HCT116 (cell line): ENCODE measurements at regions of chr7 and their contacts with region 1.

Region 1: DNA sequence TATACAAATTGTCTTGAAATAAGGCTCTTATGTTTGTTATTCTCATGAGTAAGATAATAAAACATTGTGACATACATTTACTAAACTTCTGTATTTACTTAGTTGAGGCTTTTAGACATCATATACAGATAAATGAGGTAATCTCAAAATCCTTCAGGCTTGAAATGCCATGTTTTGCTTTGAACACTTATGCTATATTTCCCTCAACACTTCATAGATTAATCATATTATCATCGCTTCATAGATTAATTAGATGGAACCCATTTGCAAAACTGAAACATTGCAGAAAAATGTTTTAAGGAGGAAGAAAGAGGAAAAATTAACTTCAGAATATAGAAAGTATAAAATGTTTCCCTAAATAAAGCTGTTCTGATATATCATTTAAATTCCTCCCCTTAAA is 165.0 kb upstream of the CNTNAP2 start:
- DNase-seq: no peak
- ATAC-seq: no peak
- H3K4me3 ChIP-seq: no peak overlapping the region
- H3K27ac ChIP-seq: no peak overlapping the region
- H3K4me1 ChIP-seq: no peaks in the 10 kb centered on the region
- H3K27me3 ChIP-seq: no peaks in the 10 kb centered on the region
- CTCF ChIP-seq: no peak
- POLR2A ChIP-seq: no peak
- RAD21 ChIP-seq: no peak

Region 2: DNA sequence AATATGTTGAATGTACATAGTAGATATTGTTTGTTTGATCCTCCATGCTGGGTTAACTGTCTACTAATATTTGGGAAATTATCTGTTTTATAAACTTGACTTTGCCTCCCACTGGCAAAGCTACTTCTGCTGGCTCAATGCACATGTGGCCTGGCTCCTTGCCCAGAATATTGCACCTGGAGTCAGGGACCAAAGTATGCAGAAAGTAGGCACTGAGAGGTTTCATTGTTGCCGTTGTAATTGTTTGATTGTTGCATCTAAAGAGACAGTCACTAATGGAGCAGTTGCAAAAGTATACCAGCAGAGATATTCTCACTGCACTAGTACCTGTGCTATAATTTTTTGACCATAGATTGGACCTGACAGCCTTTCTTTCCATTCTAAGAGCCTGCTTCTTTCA is 27.2 kb after region 1 on chr7:
- CTCF ChIA-PET with region 1: no interaction called
- POLR2A ChIA-PET with region 1: no interaction called
- RAD21 ChIA-PET with region 1: no interaction called
- intact Hi-C with region 1: loop called (anchors 2 kb)
- DNase-seq: no peak
- ATAC-seq: no peak
- H3K4me3 ChIP-seq: no peak overlapping the region
- H3K27ac ChIP-seq: no peak overlapping the region
- H3K4me1 ChIP-seq: no peaks in the 10 kb centered on the region
- H3K27me3 ChIP-seq: no peaks in the 10 kb centered on the region
- CTCF ChIP-seq: no peak
- POLR2A ChIP-seq: no peak
- RAD21 ChIP-seq: no peak

Region 3: GRCh38 chr7:146201945-146202344 is 250.4 kb after region 1 on chr7:
- CTCF ChIA-PET with region 1: no interaction called
- POLR2A ChIA-PET with region 1: no interaction called
- RAD21 ChIA-PET with region 1: no interaction called
- intact Hi-C with region 1: no loop called
- DNase-seq: no peak
- ATAC-seq: no peak
- H3K4me3 ChIP-seq: no peak overlapping the region
- H3K27ac ChIP-seq: no peak overlapping the region
- H3K4me1 ChIP-seq: no peaks in the 10 kb centered on the region
- H3K27me3 ChIP-seq: no peaks in the 10 kb centered on the region
- CTCF ChIP-seq: no peak
- POLR2A ChIP-seq: no peak
- RAD21 ChIP-seq: no peak